CD4-positive, alpha-beta T cell (primary cell): ENCODE measurements at regions of chr6 and their contacts with region 1.

Region 1: DNA sequence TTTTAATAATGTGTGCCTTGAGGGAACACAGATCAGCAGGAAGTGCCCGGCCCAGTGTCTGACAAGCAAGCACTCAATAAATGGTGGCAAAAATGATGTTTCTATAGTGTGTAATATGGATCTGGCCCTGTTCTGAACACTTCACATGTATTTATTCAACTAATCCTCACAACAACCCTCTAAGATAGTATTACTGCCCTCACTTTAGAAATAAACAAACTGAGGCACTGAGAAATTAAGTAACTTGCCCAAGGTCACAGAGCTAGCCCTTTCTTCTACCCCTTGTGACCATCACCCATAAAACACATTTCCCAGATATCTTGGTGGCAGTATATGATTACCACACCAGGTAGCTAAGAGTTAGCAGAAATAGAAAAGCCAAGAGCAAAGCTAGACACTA is 12.8 kb upstream of the MTFR2 start:
- DNase-seq: no peak
- ATAC-seq: no peak
- H3K4me3 ChIP-seq: no peak overlapping the region
- H3K4me3 Mint-ChIP-seq: no peak overlapping the region
- H3K27ac ChIP-seq: no peak overlapping the region
- H3K27ac Mint-ChIP-seq: peak overlapping the region; percentile 2
- H3K4me1 ChIP-seq: no peaks in the 10 kb centered on the region
- H3K4me1 Mint-ChIP-seq: peaks cover 33% of the 10 kb centered on the region
- H3K27me3 ChIP-seq: no peaks in the 10 kb centered on the region
- H3K27me3 Mint-ChIP-seq: no peaks in the 10 kb centered on the region
- CTCF ChIP-seq: no peak

Region 2: DNA sequence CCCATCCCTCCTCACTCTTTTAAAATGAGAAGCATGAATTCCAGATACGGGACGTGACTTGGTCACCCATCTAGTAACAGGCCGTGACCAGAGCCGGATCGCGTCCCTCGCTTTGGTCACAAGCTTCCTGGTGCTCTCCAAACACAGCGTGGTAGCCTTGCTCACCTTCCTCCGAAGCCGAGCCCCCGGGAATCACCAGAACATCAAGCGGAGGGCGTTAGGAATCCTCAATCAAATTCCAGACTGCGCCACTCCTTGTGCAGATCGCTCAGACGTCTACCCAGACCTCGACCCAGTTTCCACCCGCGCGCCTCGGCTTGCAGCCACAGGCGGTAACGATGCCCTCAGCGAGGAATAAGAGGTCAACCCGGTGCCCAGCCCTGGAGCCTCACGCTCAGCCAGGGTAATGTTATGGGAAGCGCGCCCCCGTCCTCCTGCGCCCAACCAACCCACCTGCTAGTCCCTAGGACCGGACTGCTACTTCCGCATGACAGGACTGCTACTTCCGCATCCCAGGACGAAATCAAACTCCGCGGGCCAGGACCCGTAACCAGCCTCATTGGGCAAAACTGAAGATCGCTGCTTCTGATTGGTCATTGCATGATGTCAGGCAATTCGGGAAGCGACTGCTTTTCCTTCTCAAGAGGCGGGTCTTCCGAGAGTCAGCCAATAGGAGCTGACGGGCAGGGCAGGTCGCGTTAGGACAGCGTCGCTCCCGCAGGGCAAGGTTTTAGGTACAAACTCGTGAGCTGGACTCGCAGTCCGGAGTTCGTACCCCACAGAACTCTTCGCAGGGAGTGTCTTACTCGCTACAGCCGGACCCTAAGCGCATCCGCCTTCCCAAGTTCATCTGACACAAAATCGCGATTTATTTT is 12.9 kb before region 1 on chr6 and contains the start of gene MTFR2:
- CTCF ChIA-PET with region 1: no interaction called
- POLR2A ChIA-PET with region 1: interaction called, 11 read pairs
- intact Hi-C with region 1: loop called in 1 of 2 experiments (anchors 2 kb)
- DNase-seq: peak; percentile 80 to 99 (median 87)
- ATAC-seq: peak; percentile 95
- H3K4me3 ChIP-seq: peak within 1 kb of the TSS; percentile 79
- H3K4me3 Mint-ChIP-seq: peak within 1 kb of the TSS; percentile 95
- H3K27ac ChIP-seq: no peak within 1 kb of the TSS
- H3K27ac Mint-ChIP-seq: peak within 1 kb of the TSS; percentile 54
- H3K4me1 ChIP-seq: peaks cover 20% of the 10 kb centered on the region
- H3K4me1 Mint-ChIP-seq: peaks cover 39% of the 10 kb centered on the region
- H3K27me3 ChIP-seq: no peaks in the 10 kb centered on the region
- H3K27me3 Mint-ChIP-seq: no peaks in the 10 kb centered on the region
- CTCF ChIP-seq: no peak
- total RNA-seq, gene MTFR2: 1.1 to 1.2 TPM

Region 3: GRCh38 chr6:136280032-136280609 is 17.2 kb after region 1 on chr6:
- CTCF ChIA-PET with region 1: no interaction called
- POLR2A ChIA-PET with region 1: no interaction called
- intact Hi-C with region 1: loop called in 1 of 2 experiments (anchors 2 kb)
- DNase-seq: no peak
- ATAC-seq: no peak
- H3K4me3 ChIP-seq: no peak overlapping the region
- H3K4me3 Mint-ChIP-seq: peak overlapping the region; percentile 5
- H3K27ac ChIP-seq: no peak overlapping the region
- H3K27ac Mint-ChIP-seq: peak overlapping the region; percentile 3
- H3K4me1 ChIP-seq: peaks cover 15% of the 10 kb centered on the region
- H3K4me1 Mint-ChIP-seq: peaks cover 82% of the 10 kb centered on the region
- H3K27me3 ChIP-seq: no peaks in the 10 kb centered on the region
- H3K27me3 Mint-ChIP-seq: no peaks in the 10 kb centered on the region
- CTCF ChIP-seq: no peak

Region 4: GRCh38 chr6:137465378-137466009 is 1202.6 kb after region 1 on chr6:
- CTCF ChIA-PET with region 1: no interaction called
- POLR2A ChIA-PET with region 1: no interaction called
- intact Hi-C with region 1: no loop called
- DNase-seq: no peak
- ATAC-seq: no peak
- H3K4me3 ChIP-seq: no peak overlapping the region
- H3K4me3 Mint-ChIP-seq: no peak overlapping the region
- H3K27ac ChIP-seq: no peak overlapping the region
- H3K27ac Mint-ChIP-seq: no peak overlapping the region
- H3K4me1 ChIP-seq: no peaks in the 10 kb centered on the region
- H3K4me1 Mint-ChIP-seq: no peaks in the 10 kb centered on the region
- H3K27me3 ChIP-seq: no peaks in the 10 kb centered on the region
- H3K27me3 Mint-ChIP-seq: peaks cover 16% of the 10 kb centered on the region
- CTCF ChIP-seq: no peak